Ascending aorta (tissue), 2 donors: ENCODE measurements at regions of chr6 and their contacts with region 1.

Region 1: GRCh38 chr6:36985808-36986703 is at the start of gene MTCH1:
- DNase-seq: peak; percentile 51 to 94
- H3K4me3 ChIP-seq: peak within 1 kb of the TSS; percentile 82 to 100
- H3K27ac ChIP-seq: peak within 1 kb of the TSS; percentile 97 to 99
- H3K4me1 ChIP-seq: peaks cover 11 to 32% of the 10 kb centered on the region in 2 donors
- H3K27me3 ChIP-seq: no peaks in the 10 kb centered on the region
- CTCF ChIP-seq: no peak
- total RNA-seq, gene MTCH1: 175 TPM

Region 2: GRCh38 chr6:36623547-36624459 is 362.3 kb before region 1 on chr6:
- intact Hi-C with region 1: loop called (anchors 10 kb)
- DNase-seq: peak; percentile 43 to 93
- H3K4me3 ChIP-seq: no peak overlapping the region
- H3K27ac ChIP-seq: no peak overlapping the region
- H3K4me1 ChIP-seq: peaks cover 18 to 46% of the 10 kb centered on the region in 2 donors
- H3K27me3 ChIP-seq: no peaks in the 10 kb centered on the region
- CTCF ChIP-seq: peak; percentile 82 to 96 (median 82)

Region 3: DNA sequence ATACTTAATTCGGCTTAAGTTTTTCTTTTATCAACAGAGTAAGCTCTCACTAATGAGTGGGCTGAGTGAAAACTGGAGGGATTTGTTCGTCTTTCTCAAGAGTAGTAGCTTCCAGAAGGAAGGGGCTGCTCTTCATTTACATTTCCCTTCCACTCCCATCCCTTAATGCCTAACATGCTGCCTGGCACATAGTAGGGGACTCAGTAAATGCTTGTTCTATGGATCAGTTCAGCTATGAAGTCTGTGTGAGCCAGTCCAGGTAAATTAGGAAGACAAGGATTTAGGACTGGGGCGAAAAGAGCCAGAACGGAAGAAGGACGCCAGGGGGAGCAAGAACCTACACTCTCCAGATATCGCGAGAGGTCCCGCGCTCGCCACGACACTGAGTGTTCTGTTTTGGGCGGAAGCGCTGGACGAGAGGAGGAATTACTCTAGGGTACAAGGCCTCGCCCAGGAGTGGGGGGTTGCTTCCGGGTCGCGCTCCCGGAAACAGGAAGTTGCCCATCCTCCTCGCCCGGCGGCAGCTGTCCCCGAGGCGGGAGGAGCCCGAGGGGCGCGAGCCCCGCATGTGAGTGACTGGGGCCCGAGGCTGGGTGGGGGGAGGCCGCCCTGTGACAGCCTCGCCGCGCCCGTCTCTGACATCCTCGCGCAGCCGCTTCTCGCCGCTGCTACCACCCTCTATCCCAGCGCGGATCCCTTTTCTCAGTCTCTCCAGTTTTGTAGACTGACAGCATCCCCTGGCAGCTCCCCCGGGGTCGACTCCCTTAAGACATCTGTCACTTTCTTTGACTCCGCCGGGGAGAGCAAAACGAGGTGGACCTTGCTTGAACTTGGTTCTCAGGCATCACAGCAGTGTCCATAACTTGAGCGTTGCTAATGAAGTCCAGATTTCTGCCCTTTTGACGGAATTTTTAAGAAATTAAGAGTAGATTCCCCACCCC is 100.3 kb before region 1 on chr6 and contains the start of gene C6orf89:
- intact Hi-C with region 1: loop called (anchors 1 kb)
- DNase-seq: peak; percentile 93 to 99
- H3K4me3 ChIP-seq: peak within 1 kb of the TSS; percentile 85 to 90
- H3K27ac ChIP-seq: peak within 1 kb of the TSS; percentile 89 to 91
- H3K4me1 ChIP-seq: peaks cover 0 to 14% of the 10 kb centered on the region in 2 donors
- H3K27me3 ChIP-seq: no peaks in the 10 kb centered on the region
- CTCF ChIP-seq: peak; percentile 76 to 93 (median 84)
- total RNA-seq, gene C6orf89: 21.6 TPM

Region 4: DNA sequence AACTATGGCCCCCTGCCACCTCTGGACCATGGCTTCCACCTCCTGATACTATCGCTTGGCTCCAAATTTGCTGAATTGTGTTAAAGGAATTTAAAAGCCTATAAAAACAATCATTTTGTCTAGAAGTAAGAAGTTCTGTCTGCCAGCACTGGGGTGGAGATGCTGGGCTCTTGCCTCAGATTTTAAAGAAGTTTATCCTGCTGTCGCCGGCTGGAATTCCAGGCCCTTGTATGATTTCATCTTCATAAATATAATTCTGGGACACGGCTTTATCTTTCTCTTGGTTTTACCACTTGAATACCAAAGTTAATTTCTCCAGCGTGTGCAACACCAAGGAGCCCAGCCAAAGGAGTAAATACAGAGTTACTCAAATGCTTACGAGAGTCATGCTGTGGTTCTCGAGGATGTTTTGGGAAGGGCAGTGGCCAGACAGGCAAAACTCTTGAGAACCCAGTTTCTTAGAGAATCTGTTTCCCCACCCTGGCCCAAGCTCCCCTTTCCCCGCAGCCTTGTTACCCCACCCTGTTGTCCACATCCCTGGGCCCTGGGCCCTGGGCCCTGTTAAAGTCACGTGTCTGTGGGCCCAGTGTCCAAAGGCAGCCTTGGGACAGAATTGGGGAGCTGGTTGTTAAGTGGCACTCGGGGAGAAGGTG is 68.4 kb before region 1 on chr6:
- intact Hi-C with region 1: loop called (anchors 5 kb)
- DNase-seq: peak in 1 of 2 donors; percentile 83
- H3K4me3 ChIP-seq: no peak overlapping the region
- H3K27ac ChIP-seq: peak overlapping the region; percentile 80 to 88
- H3K4me1 ChIP-seq: peaks cover 6 to 33% of the 10 kb centered on the region in 2 donors
- H3K27me3 ChIP-seq: no peaks in the 10 kb centered on the region
- CTCF ChIP-seq: no peak

Region 5: GRCh38 chr6:36962874-36963273 is 23.2 kb before region 1 on chr6:
- intact Hi-C with region 1: no loop called
- DNase-seq: peak; percentile 52 to 83
- H3K4me3 ChIP-seq: no peak overlapping the region
- H3K27ac ChIP-seq: no peak overlapping the region
- H3K4me1 ChIP-seq: peaks cover 0 to 7% of the 10 kb centered on the region in 2 donors
- H3K27me3 ChIP-seq: no peaks in the 10 kb centered on the region
- CTCF ChIP-seq: no peak

Region 6: DNA sequence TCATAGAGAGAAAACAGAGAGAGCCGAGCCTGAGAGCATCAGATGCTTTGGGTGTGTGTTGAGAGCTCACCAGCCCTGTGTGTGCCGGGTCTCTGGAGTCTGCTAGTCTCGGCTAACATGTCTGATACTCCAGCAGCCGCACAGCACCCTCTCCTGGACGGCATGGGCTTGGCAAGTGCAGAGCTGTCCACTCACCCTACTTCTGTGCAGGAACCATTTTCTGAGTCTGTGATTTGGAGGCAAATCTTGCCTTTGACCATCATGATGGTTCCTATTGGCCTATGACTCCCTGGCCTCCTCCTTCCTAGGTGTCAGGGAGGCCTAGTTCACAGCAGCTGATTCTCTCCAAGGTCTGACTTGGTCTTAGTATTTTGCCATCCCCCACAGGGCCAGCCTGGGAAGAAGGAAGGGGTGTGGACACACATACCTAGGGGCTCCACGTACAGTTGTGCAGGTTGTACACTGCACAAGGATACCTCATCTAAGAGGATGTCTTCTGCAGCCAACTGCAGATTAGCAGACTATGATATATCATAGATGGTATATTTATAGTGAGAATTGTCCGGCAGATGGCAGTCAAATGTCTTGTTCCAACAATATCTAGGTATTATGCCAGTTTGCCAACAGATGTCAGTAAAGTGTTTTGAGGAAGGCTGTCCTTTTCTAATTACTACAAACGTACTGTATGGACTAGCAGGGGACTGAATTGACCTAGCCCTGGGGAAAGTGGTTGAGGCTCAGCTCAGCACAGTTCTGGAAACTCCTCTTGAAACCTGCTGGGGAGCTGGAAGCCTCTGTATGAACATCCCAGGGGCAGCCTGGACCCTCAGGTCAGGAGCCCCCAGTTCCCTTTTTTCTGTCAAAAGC is 32.4 kb after region 1 on chr6:
- intact Hi-C with region 1: loop called (anchors 2 kb)
- DNase-seq: peak; percentile 64 to 95
- H3K4me3 ChIP-seq: no peak overlapping the region
- H3K27ac ChIP-seq: peak overlapping the region; percentile 32 to 63
- H3K4me1 ChIP-seq: peaks cover 0 to 2% of the 10 kb centered on the region in 2 donors
- H3K27me3 ChIP-seq: no peaks in the 10 kb centered on the region
- CTCF ChIP-seq: peak; percentile 83 to 91 (median 86)

Region 7: GRCh38 chr6:37102279-37103168 is 116.5 kb after region 1 on chr6:
- intact Hi-C with region 1: loop called (anchors 5 kb)
- DNase-seq: peak; percentile 70 to 96
- H3K4me3 ChIP-seq: peak overlapping the region; percentile 7 to 62
- H3K27ac ChIP-seq: peak overlapping the region; percentile 70 to 88
- H3K4me1 ChIP-seq: peaks cover 11% of the 10 kb centered on the region in 2 donors
- H3K27me3 ChIP-seq: no peaks in the 10 kb centered on the region
- CTCF ChIP-seq: no peak